CD8-positive, alpha-beta T cell (primary cell): ENCODE measurements at regions of chr15 and their contacts with region 1.

Region 1: DNA sequence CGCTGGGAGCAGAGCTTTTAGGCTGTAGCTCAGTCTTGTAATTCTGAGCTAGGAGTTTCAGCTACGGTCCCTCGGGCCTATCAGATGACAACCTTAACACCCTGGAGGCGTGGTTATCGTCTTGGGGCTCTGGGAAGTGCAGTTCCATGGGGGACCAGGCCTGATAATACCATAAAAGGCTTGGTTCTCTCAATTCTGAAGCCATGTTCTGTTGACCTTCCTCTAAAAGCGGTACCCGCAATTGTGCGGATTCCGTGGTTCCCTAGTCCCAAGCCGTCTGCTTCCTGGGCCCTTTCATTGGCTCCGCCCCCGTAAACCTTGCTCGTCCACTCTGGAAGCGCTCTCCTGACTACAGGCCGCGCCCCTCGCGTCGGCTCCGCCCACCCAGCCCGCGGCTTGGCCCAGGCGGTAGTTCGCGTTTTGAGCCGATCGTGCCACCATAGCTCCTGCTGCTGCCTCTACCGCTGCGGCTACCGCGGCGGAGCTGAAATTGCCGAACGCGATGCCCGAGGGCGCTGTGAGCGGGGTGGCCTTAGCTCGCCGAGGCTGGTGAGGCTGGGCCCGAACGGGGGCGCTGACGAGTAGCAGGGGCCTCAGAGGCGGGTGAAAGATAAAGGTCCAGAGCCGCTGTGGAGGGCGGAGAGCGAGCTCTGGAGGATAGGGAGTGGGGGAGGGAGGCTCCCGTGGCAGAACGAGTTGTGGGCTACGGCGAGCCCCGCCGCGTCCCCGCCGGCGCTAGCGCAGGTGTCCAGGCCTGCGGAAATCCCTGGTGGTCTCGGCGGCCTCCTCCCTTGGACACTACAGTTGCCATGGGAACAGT is at the start of gene MAPKBP1:
- DNase-seq: peak; percentile 93 to 100 (median 97)
- ATAC-seq: peak; percentile 90
- H3K4me3 ChIP-seq: peak within 1 kb of the TSS; percentile 70 to 91
- H3K4me3 Mint-ChIP-seq: peak within 1 kb of the TSS; percentile 95
- H3K27ac ChIP-seq: peak within 1 kb of the TSS; percentile 45 to 84
- H3K27ac Mint-ChIP-seq: peak within 1 kb of the TSS; percentile 95
- H3K4me1 ChIP-seq: peaks cover 46% of the 10 kb centered on the region
- H3K4me1 Mint-ChIP-seq: peaks cover 60% of the 10 kb centered on the region
- H3K27me3 ChIP-seq: no peaks in the 10 kb centered on the region
- H3K27me3 Mint-ChIP-seq: no peaks in the 10 kb centered on the region
- CTCF ChIP-seq: peak; percentile 47
- total RNA-seq, gene MAPKBP1: 24.2 to 25.3 TPM

Region 2: DNA sequence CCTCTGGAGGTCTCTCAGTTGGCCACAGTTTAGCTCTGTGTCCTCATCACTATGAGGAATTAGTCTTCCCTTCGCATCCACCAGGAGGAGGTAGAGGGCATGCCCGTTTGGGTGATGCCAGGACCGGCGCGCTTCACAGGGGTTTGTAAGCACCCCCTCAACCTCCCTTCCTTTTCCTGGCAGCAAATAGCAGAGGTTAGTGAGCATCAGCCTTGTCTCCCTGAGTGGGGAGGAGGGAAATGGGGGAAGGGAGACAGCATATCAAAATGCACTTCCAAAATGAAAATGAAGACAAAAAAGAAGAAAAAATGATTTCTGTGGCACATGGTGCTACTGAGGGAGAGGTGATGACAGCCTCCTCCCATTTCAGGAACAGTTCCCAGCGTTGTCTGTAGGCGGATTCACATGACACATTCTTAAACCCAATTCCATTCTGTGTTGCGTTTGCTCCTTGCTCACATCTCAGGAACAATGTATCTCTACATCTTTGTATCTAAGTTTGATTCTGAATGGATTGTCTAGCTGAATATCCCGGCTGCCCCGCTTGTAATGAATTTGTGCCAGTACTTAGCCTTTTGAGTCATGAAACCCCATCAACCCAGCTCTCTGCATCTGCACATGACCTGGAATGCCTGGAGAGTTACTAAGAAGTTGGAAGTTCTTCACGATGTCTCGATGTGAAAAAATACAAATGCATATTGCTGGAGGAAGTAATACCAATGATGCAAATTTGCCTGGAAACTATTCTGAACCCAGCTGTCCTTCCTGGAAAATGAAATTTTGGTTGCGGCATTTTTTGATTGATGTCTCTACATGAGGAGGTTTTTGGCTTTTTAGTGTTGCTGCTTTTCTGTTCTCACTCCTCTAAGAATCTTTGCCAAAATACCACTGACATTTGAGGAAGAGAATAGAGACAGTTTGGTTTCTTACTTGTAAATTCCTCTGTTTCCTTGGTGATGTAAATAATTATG is 170.0 kb before region 1 on chr15:
- CTCF ChIA-PET with region 1: interaction called, 18 read pairs
- POLR2A ChIA-PET with region 1: no interaction called
- intact Hi-C with region 1: no loop called
- DNase-seq: peak; percentile 22 to 76 (median 59)
- ATAC-seq: peak; percentile 97
- H3K4me3 ChIP-seq: no peak overlapping the region
- H3K4me3 Mint-ChIP-seq: peak overlapping the region; percentile 53
- H3K27ac ChIP-seq: no peak overlapping the region
- H3K27ac Mint-ChIP-seq: no peak overlapping the region
- H3K4me1 ChIP-seq: peaks cover 4% of the 10 kb centered on the region
- H3K4me1 Mint-ChIP-seq: peaks cover 8% of the 10 kb centered on the region
- H3K27me3 ChIP-seq: no peaks in the 10 kb centered on the region
- H3K27me3 Mint-ChIP-seq: peaks cover 12% of the 10 kb centered on the region
- CTCF ChIP-seq: peak; percentile 71

Region 3: GRCh38 chr15:41695750-41696426 is 78.4 kb before region 1 on chr15:
- CTCF ChIA-PET with region 1: interaction called, 7 read pairs
- POLR2A ChIA-PET with region 1: no interaction called
- intact Hi-C with region 1: loop called in 1 of 2 experiments (anchors 5 kb)
- DNase-seq: peak; percentile 7 to 78 (median 41)
- ATAC-seq: peak; percentile 96
- H3K4me3 ChIP-seq: no peak overlapping the region
- H3K4me3 Mint-ChIP-seq: peak overlapping the region; percentile 29
- H3K27ac ChIP-seq: peak overlapping the region in 1 of 2 experiments; percentile 44
- H3K27ac Mint-ChIP-seq: peak overlapping the region; percentile 69
- H3K4me1 ChIP-seq: peaks cover 22% of the 10 kb centered on the region
- H3K4me1 Mint-ChIP-seq: peaks cover 54% of the 10 kb centered on the region
- H3K27me3 ChIP-seq: no peaks in the 10 kb centered on the region
- H3K27me3 Mint-ChIP-seq: no peaks in the 10 kb centered on the region
- CTCF ChIP-seq: peak; percentile 41

Region 4: DNA sequence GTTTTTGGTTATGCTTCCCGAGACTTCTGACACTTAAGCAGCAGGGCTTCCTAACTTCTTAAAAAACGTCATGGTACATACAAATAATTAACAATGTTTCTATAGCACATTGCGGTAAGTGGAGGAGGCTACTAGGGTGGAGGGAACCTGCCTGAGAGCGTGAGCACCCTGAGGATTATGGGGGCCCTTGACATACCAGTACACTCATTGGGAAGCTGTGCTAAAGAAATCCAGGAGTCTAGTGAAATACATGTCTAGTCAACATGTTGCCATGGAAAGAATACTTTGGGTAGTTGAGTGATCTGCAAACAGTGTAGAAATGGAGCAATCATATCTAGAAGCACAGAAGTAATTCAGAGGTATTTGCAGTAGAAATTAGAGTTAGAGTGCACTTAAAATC is 39.2 kb before region 1 on chr15:
- CTCF ChIA-PET with region 1: no interaction called
- POLR2A ChIA-PET with region 1: no interaction called
- intact Hi-C with region 1: no loop called
- DNase-seq: no peak
- ATAC-seq: no peak
- H3K4me3 ChIP-seq: no peak overlapping the region
- H3K4me3 Mint-ChIP-seq: no peak overlapping the region
- H3K27ac ChIP-seq: no peak overlapping the region
- H3K27ac Mint-ChIP-seq: no peak overlapping the region
- H3K4me1 ChIP-seq: no peaks in the 10 kb centered on the region
- H3K4me1 Mint-ChIP-seq: no peaks in the 10 kb centered on the region
- H3K27me3 ChIP-seq: no peaks in the 10 kb centered on the region
- H3K27me3 Mint-ChIP-seq: no peaks in the 10 kb centered on the region
- CTCF ChIP-seq: no peak

Region 5: GRCh38 chr15:41820791-41821423 is 46.6 kb after region 1 on chr15:
- CTCF ChIA-PET with region 1: interaction called, 23 read pairs
- POLR2A ChIA-PET with region 1: no interaction called
- intact Hi-C with region 1: no loop called
- DNase-seq: peak in 1 of 9 experiments; percentile 16
- ATAC-seq: no peak
- H3K4me3 ChIP-seq: no peak overlapping the region
- H3K4me3 Mint-ChIP-seq: no peak overlapping the region
- H3K27ac ChIP-seq: no peak overlapping the region
- H3K27ac Mint-ChIP-seq: no peak overlapping the region
- H3K4me1 ChIP-seq: no peaks in the 10 kb centered on the region
- H3K4me1 Mint-ChIP-seq: no peaks in the 10 kb centered on the region
- H3K27me3 ChIP-seq: no peaks in the 10 kb centered on the region
- H3K27me3 Mint-ChIP-seq: no peaks in the 10 kb centered on the region
- CTCF ChIP-seq: no peak

Region 6: GRCh38 chr15:41904541-41905005 is 130.3 kb after region 1 on chr15:
- CTCF ChIA-PET with region 1: interaction called, 113 read pairs
- POLR2A ChIA-PET with region 1: interaction called, 14 read pairs
- intact Hi-C with region 1: loop called (anchors 1 kb)
- DNase-seq: peak; percentile 50 to 86 (median 76)
- ATAC-seq: peak; percentile 86
- H3K4me3 ChIP-seq: no peak overlapping the region
- H3K4me3 Mint-ChIP-seq: no peak overlapping the region
- H3K27ac ChIP-seq: no peak overlapping the region
- H3K27ac Mint-ChIP-seq: peak overlapping the region; percentile 57
- H3K4me1 ChIP-seq: peaks cover 3% of the 10 kb centered on the region
- H3K4me1 Mint-ChIP-seq: peaks cover 6% of the 10 kb centered on the region
- H3K27me3 ChIP-seq: no peaks in the 10 kb centered on the region
- H3K27me3 Mint-ChIP-seq: no peaks in the 10 kb centered on the region
- CTCF ChIP-seq: peak; percentile 92

Region 7: DNA sequence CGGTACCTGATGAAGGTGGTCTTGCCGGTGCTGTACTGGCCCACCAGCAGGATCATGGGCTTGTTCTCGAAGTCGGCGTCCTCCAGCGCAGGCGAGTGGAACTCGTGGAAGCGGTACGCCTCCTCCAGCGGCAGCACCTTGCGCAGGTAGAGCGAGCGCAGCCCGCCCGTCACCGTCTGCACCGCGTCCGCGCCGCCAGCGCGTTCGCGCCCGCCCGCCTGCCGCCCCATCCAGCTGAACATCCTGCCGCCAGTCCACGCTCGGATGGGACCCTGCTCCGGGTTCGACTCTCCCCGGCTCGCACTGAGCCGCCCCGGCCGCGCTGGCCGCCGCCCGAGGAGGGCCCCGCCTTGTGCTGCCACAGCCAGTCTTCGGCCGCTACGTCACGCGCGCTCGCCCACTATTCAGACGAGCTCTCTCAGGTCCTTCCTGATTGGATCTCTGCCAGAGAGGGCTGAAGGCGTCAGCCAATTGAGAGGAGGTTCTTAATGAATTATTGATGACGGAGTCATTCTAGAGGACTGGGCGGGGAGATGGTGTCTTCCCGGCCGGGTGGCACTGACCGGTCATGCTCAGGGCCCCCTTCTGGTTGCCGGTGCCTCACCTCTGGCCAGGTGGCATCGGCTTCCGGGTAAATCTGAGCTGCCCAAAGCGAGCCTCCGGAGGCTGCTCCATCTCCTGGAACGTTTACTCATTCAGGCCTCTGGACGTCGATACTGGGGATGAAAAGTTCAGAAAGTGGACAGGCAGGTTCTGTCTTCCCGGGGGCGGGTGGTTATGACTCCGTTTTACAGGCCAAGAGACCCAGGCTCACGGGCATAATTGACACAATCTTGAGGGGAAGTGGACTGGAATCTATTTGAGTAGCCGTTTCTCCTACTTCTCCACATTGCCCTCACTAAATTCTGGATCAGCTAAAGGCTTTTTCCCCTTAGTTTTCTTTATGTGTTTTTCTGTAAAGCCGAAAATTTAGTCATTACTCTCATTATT is 198.3 kb after region 1 on chr15 and contains the start of gene EHD4:
- CTCF ChIA-PET with region 1: interaction called, 5 read pairs
- POLR2A ChIA-PET with region 1: interaction called, 9 read pairs
- intact Hi-C with region 1: loop called (anchors 1 to 2 kb)
- DNase-seq: peak; percentile 85 to 98 (median 94)
- ATAC-seq: peak; percentile 81
- H3K4me3 ChIP-seq: peak within 1 kb of the TSS; percentile 69 to 77
- H3K4me3 Mint-ChIP-seq: peak within 1 kb of the TSS; percentile 97
- H3K27ac ChIP-seq: peak within 1 kb of the TSS; percentile 83 to 86
- H3K27ac Mint-ChIP-seq: peak within 1 kb of the TSS; percentile 97
- H3K4me1 ChIP-seq: peaks cover 21% of the 10 kb centered on the region
- H3K4me1 Mint-ChIP-seq: peaks cover 44% of the 10 kb centered on the region
- H3K27me3 ChIP-seq: peaks cover 0 to 4% of the 10 kb centered on the region in 2 experiments
- H3K27me3 Mint-ChIP-seq: peaks cover 5% of the 10 kb centered on the region
- CTCF ChIP-seq: no peak
- total RNA-seq, gene EHD4: 36.4 to 40.5 TPM

Region 8: DNA sequence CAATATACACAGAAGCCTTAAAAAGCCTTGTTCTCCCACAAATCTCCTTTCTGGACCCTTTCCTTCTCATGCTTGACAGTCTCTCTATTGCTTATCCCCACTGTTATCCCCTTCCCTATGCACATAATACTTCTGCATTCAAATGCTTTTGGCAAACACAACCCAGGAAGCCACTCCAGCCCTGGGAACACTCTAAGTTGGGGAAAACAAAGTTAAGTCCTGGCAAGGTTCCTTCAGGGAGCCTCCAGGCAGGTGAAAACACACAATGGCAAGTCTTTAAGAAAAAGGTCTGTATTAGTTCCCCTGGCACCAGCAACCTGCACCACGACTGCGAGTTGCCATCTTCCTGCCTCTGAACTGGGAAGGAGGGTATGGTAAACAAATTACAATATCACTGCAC is 479.0 kb after region 1 on chr15:
- CTCF ChIA-PET with region 1: no interaction called
- POLR2A ChIA-PET with region 1: no interaction called
- intact Hi-C with region 1: no loop called
- DNase-seq: no peak
- ATAC-seq: no peak
- H3K4me3 ChIP-seq: no peak overlapping the region
- H3K4me3 Mint-ChIP-seq: no peak overlapping the region
- H3K27ac ChIP-seq: no peak overlapping the region
- H3K27ac Mint-ChIP-seq: peak overlapping the region; percentile 29
- H3K4me1 ChIP-seq: no peaks in the 10 kb centered on the region
- H3K4me1 Mint-ChIP-seq: peaks cover 6% of the 10 kb centered on the region
- H3K27me3 ChIP-seq: no peaks in the 10 kb centered on the region
- H3K27me3 Mint-ChIP-seq: no peaks in the 10 kb centered on the region
- CTCF ChIP-seq: no peak